A673 (cell line): ENCODE measurements at regions of chr1 and their contacts with region 1.

Region 1: GRCh38 chr1:11979028-11979850 is 1.0 kb upstream of the MFN2 start:
- DNase-seq: peak; percentile 21
- H3K4me3 ChIP-seq: peak overlapping the region; percentile 92
- H3K27ac ChIP-seq: peak overlapping the region; percentile 96
- H3K4me1 ChIP-seq: peaks cover 24% of the 10 kb centered on the region
- H3K27me3 ChIP-seq: no peaks in the 10 kb centered on the region
- CTCF ChIP-seq: no peak

Region 2: DNA sequence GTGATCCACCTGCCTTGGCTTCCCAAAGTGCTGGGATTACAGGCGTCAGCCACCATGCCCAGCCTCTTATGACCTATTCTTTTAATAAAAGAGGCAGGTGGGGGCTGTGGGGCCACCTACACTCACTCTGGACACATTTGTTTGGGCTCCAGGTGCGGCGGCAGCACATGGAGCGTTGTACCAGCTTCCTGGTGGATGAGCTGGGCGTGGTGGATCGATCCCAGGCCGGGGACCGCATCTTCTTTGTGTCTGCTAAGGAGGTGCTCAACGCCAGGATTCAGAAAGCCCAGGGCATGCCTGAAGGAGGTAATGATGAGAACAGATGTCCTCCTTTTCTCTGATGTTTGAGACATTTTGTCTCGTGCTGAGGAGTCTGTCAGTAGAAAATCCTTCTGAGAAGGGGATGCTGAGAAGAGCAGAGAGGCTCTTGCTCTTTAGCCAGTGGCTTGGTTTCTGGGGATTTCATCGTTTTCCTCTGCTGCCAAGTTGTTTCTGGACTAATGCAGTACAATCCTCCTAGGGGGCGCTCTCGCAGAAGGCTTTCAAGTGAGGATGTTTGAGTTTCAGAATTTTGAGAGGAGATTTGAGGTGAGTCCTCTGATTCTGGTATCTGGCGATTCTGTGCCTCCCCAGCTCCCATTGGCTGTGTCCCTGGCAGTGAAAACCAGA is 22.1 kb after region 1 on chr1:
- CTCF ChIA-PET with region 1: no interaction called
- POLR2A ChIA-PET with region 1: interaction called, 14 read pairs
- intact Hi-C with region 1: no loop called
- DNase-seq: peak; percentile 77
- H3K4me3 ChIP-seq: no peak overlapping the region
- H3K27ac ChIP-seq: peak overlapping the region; percentile 77
- H3K4me1 ChIP-seq: no peaks in the 10 kb centered on the region
- H3K27me3 ChIP-seq: no peaks in the 10 kb centered on the region
- CTCF ChIP-seq: peak; percentile 84

Region 3: DNA sequence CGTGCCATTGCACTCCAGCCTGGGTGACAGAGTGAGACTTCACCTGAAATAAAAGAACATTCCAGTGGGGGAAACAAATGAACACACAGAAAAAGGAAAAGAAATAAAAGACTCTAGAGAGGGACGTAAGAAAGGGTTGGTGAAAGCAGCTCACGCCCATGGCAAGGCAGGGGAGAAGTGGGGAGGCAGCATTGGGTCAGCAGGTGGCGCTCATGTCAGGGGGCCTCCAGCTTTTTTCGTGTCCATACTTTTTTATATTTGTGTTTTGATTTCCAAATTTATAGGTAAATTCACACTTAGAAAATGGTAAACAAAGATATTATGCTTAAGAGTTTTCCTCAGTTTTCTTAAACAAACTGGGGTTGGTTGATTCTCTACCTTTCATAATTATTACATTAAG is 296.1 kb after region 1 on chr1:
- CTCF ChIA-PET with region 1: no interaction called
- POLR2A ChIA-PET with region 1: interaction called, 14 read pairs
- intact Hi-C with region 1: no loop called
- DNase-seq: peak; percentile 38
- H3K4me3 ChIP-seq: no peak overlapping the region
- H3K27ac ChIP-seq: no peak overlapping the region
- H3K4me1 ChIP-seq: no peaks in the 10 kb centered on the region
- H3K27me3 ChIP-seq: no peaks in the 10 kb centered on the region
- CTCF ChIP-seq: peak; percentile 80